MCF 10A (cell line): ENCODE measurements at regions of chr7 and their contacts with region 1.

Region 1: GRCh38 chr7:116122972-116123595 is 87.3 kb upstream of the TES start:
- DNase-seq: peak; percentile 38
- H3K4me3 Mint-ChIP-seq: no peak overlapping the region
- H3K27ac Mint-ChIP-seq: no peak overlapping the region
- H3K4me1 Mint-ChIP-seq: no peaks in the 10 kb centered on the region
- H3K27me3 Mint-ChIP-seq: peaks cover 96% of the 10 kb centered on the region
- CTCF ChIP-seq: peak; percentile 53

Region 2: DNA sequence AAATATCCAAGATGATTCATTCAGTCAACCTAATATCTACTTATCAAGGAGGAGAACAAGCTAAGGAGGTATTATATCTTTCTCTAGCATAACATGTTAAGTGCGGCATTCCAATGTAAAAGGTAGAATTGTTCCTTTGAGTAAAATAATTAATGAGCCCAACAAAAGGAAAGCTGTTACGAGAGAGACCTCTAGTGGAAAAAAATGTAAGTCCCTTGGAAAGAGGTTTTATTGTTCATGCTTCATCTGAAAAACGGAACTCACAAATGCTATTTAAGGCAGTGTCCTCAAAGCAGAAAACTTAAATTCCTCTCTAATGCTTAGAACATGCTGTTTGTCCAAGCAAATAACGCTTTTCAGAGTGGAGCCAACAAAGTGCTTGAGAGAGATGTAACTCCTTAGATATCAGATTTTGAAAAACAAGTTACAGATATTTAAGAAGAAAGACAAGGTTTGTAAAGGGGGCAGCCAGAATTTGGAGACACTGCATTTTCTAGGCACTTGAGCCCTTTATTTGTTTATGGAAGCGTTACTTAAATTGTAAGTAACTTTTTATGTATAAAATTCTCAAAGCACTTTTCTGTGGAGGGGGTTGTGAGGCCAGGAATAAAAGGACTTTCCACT is 212.4 kb before region 1 on chr7:
- CTCF ChIA-PET with region 1: no interaction called
- POLR2A ChIA-PET with region 1: no interaction called
- intact Hi-C with region 1: loop called (anchors 2 kb)
- DNase-seq: peak; percentile 39
- H3K4me3 Mint-ChIP-seq: no peak overlapping the region
- H3K27ac Mint-ChIP-seq: no peak overlapping the region
- H3K4me1 Mint-ChIP-seq: no peaks in the 10 kb centered on the region
- H3K27me3 Mint-ChIP-seq: peaks cover 97% of the 10 kb centered on the region
- CTCF ChIP-seq: peak; percentile 54

Region 3: DNA sequence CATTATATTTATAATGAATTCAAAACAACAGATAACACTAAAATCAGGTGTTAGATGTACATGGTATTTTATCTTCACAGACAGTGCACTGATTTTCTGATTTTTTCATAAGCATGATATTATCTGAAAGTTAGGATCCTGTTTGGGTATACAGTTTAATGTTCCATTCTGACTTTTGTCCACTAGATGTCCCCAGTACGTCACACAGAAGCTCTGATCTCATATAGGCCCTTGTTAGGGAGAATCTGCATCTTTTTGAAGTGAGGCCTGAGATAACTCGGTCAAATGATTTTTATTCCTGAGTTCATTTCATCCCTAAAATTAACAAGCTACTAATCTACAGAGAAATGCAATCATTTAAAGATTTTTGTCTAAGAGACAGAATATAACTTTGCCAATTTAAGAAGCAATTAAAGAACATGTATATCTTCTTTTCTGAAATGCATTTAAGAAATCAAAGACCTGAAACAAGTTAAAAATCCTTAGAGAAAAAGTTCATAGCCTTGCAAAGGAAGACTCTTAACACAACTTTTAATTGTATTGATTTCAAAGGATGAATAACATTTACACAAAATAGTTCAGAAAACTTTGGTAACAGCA is 15.2 kb after region 1 on chr7:
- CTCF ChIA-PET with region 1: interaction called, 42 read pairs
- POLR2A ChIA-PET with region 1: interaction called, 3 read pairs
- intact Hi-C with region 1: no loop called
- DNase-seq: peak; percentile 72
- H3K4me3 Mint-ChIP-seq: no peak overlapping the region
- H3K27ac Mint-ChIP-seq: no peak overlapping the region
- H3K4me1 Mint-ChIP-seq: peaks cover 12% of the 10 kb centered on the region
- H3K27me3 Mint-ChIP-seq: peaks cover 45% of the 10 kb centered on the region
- CTCF ChIP-seq: peak; percentile 64

Region 4: GRCh38 chr7:117110480-117111337 is 987.6 kb after region 1 on chr7:
- CTCF ChIA-PET with region 1: no interaction called
- POLR2A ChIA-PET with region 1: no interaction called
- intact Hi-C with region 1: no loop called
- DNase-seq: no peak
- H3K4me3 Mint-ChIP-seq: no peak overlapping the region
- H3K27ac Mint-ChIP-seq: no peak overlapping the region
- H3K4me1 Mint-ChIP-seq: no peaks in the 10 kb centered on the region
- H3K27me3 Mint-ChIP-seq: no peaks in the 10 kb centered on the region
- CTCF ChIP-seq: no peak